ENCODE measurements at regions of chr9 and their contacts with region 1.

Region 1: DNA sequence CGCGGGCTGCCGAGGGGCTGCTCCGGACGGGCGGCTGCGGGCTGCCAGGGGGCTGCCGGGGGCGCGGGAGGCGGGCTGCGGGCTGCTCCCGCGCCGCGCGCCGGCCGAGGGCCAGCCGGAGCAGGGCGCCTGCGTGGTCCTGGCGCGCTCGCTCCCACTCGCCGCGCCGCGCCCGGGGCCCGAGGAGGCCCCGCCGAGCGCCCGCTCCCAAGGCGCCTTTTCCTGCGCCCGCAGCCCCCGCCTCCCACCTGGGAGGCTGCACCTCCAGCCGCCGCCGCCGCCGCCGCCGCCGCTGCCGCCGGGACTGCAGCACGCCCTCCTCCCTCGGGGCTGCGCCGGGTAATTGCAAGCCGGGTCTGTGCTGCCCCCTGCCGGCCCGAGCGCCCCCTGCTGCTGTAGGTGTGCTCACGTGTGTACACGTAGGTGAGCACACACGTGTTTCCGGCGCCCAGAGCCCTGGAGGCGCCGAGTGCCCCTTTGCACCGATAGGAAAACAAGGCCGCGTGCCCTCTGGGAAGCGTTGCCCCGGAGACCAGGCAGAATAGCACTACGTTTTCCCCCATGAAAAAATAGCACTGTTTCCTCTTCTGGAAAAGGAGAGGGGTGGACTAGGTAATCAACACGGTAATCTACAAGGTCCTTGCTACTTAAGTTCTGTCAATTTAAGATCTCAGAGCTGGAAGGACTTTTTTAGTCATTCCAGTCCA is at the start of gene EPB41L4B:
- DNase-seq: peak; percentile 86
- H3K4me3 ChIP-seq: peak within 1 kb of the TSS; percentile 48 to 79 (median 55)
- H3K27ac ChIP-seq: peak within 1 kb of the TSS; percentile 51
- H3K4me1 ChIP-seq: peaks cover 45% of the 10 kb centered on the region
- H3K27me3 ChIP-seq: no peaks in the 10 kb centered on the region
- CTCF ChIP-seq: peak; percentile 75 to 90
- total RNA-seq, gene EPB41L4B: 3.5 to 4.8 TPM

Region 2: DNA sequence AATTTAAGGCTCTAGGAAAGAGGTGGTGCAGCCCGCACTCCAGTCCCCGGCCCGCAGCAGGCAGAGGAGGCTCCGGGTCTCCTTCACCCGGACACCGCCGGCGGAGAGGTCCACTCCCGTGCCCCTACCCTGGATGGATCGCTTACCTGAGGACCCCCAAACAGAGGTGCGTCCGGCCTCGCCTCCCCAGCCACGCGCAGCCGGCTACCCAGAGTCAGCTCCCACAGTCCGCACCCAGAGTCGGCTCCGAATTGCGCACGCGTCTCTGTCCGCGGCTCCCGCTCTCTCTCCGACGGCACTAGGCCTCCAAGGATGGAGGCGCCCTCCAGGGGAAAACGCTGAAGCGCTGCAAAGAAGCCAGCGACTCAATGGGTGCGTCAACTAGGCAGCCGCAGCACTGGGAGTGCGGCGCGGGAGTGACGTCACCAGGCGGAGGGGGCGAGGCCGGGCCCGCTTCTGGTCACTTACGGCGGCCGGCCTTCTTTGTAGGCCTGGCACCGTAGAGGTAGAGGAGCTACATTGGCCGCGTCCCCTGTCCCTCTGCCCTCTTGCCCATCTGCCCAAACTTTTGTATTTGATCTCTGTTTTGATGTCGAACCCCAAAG is 387.1 kb before region 1 on chr9 and contains the start of gene ELP1:
- CTCF ChIA-PET with region 1: no interaction called
- dilution Hi-C with region 1: no loop called
- in situ Hi-C with region 1: no loop called
- intact Hi-C with region 1: loop called (anchors 1 kb)
- DNase-seq: peak; percentile 94
- H3K4me3 ChIP-seq: peak within 1 kb of the TSS; percentile 76 to 93 (median 91)
- H3K27ac ChIP-seq: peak within 1 kb of the TSS; percentile 80
- H3K4me1 ChIP-seq: peaks cover 14% of the 10 kb centered on the region
- H3K27me3 ChIP-seq: no peaks in the 10 kb centered on the region
- CTCF ChIP-seq: peak in 1 of 2 donors; percentile 53
- total RNA-seq, gene ELP1: 24.2 to 30.2 TPM

Region 3: DNA sequence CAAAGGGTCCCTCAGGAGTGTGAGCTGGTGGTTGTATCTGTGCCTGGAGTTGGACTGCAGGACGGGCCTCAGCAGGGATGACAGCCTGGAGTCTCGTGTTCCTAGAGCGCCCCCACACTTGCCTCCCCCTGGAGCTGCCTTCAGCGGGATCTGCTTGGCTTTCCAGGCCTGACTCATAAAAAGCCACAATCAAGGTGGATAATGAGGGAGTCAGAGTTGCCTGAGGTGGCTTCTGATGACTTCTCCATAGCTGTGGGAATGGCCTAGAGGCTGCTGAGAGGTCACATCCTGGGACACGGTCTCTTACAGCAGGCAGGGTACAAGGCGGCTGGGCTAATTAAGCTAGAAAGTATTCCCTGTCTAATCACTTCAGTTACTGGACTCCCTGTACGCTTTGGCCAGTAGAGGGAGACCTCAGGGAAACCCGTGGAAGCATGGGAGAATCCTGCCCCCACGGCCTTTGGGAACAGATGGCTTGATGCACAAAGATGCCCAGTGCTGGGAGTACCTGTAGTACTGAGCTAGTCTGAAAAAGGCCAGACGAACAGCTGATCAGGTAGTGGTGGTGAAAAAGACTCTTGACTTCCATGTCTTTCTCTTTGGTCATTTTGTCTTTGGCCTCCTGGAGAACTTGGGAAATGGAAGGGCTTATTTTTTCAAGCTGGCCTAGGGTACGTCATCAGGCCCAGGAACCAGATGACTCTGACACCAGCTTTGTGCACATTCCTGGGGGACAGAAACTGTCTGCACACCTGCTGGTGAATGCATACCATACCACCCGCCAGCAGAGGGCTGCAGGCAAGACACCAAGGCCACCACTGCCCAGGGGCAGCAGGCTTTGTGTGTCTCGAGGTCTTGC is 137.7 kb before region 1 on chr9:
- CTCF ChIA-PET with region 1: no interaction called
- dilution Hi-C with region 1: no loop called
- in situ Hi-C with region 1: loop called in 1 of 2 experiments (anchors 5 kb)
- intact Hi-C with region 1: loop called (anchors 1 kb)
- DNase-seq: peak; percentile 60
- H3K4me3 ChIP-seq: no peak overlapping the region
- H3K27ac ChIP-seq: no peak overlapping the region
- H3K4me1 ChIP-seq: peaks cover 9% of the 10 kb centered on the region
- H3K27me3 ChIP-seq: no peaks in the 10 kb centered on the region
- CTCF ChIP-seq: peak; percentile 39 to 69

Region 4: DNA sequence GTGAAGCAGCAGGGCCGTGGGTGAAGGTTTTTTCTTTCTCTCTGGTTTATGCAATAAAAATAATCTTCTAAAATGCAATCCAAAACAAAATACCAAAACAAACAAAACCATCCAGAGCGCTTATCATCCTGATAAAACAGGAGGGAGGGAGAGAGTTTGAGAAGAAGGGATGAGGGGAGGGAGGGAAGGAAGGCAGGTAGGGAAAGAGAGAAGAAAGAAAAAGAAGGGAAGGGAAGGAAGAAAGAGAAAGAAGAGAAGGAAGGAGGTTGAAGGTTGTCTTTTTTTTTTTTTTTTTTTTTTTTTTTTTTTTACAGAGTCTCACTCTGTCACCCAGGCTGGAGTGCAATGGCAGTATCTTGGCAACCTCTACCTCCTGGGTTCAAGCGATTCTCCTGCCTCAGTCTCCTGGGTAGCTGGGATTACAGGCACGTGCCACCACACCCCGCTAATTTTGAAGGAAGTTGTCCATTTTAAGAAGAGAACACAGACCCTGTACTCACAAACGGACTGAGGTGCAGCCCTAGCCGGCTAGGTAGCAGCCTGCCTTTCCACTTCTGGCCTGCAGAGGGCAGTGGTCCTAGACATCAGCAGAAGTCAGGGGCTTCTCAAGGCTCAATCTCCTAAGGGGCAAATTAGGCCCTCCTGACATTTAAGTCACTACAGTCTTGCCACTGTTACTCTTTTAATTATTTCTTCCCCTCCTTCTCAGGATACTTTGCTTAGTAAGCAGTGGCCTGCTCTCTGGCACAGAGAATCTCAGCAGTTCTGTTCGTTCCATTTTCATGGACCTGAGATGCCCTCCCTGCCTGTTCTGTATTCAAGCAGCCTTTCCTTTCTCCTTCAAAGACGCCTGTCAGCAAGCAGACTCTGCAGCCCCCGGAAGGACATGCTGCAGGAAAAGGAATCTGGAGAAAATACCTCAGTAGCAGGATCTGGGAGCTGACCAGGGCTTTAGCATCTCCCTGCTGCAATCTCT is 76.5 kb before region 1 on chr9:
- CTCF ChIA-PET with region 1: interaction called, 3 read pairs
- dilution Hi-C with region 1: loop called (anchors 5 kb)
- in situ Hi-C with region 1: no loop called
- intact Hi-C with region 1: loop called (anchors 1 kb)
- DNase-seq: peak; percentile 40
- H3K4me3 ChIP-seq: no peak overlapping the region
- H3K27ac ChIP-seq: no peak overlapping the region
- H3K4me1 ChIP-seq: no peaks in the 10 kb centered on the region
- H3K27me3 ChIP-seq: no peaks in the 10 kb centered on the region
- CTCF ChIP-seq: peak; percentile 93 to 98

Region 5: DNA sequence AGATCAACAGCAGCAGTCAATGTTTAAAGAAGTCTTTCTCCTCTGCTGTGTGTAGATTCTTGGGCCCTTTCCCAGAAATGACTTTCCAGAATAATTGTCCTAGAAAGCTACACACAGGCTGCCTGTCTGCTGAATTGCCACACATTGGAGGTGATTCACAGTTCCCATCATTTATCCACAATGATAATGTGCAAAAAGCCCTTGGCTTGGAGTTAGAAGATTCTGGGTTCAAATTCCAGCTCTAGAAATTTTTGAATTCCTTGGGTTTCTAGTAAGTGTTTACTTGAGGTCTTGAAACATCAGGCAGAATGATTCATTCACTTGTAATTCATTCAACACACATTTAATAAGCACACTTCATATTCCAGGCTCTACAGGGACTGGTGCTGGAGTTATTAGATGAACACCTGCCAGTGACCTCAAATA is 28.5 kb after region 1 on chr9:
- CTCF ChIA-PET with region 1: interaction called, 4 read pairs
- dilution Hi-C with region 1: no loop called
- in situ Hi-C with region 1: no loop called
- intact Hi-C with region 1: loop called (anchors 1 kb)
- DNase-seq: peak; percentile 73
- H3K4me3 ChIP-seq: no peak overlapping the region
- H3K27ac ChIP-seq: no peak overlapping the region
- H3K4me1 ChIP-seq: peaks cover 20% of the 10 kb centered on the region
- H3K27me3 ChIP-seq: peaks cover 11% of the 10 kb centered on the region
- CTCF ChIP-seq: no peak

Measured in mammary epithelial cell (primary cell).